Aorta (tissue), 5 donors: ENCODE measurements at regions of chr15 and their contacts with region 1.

Region 1: DNA sequence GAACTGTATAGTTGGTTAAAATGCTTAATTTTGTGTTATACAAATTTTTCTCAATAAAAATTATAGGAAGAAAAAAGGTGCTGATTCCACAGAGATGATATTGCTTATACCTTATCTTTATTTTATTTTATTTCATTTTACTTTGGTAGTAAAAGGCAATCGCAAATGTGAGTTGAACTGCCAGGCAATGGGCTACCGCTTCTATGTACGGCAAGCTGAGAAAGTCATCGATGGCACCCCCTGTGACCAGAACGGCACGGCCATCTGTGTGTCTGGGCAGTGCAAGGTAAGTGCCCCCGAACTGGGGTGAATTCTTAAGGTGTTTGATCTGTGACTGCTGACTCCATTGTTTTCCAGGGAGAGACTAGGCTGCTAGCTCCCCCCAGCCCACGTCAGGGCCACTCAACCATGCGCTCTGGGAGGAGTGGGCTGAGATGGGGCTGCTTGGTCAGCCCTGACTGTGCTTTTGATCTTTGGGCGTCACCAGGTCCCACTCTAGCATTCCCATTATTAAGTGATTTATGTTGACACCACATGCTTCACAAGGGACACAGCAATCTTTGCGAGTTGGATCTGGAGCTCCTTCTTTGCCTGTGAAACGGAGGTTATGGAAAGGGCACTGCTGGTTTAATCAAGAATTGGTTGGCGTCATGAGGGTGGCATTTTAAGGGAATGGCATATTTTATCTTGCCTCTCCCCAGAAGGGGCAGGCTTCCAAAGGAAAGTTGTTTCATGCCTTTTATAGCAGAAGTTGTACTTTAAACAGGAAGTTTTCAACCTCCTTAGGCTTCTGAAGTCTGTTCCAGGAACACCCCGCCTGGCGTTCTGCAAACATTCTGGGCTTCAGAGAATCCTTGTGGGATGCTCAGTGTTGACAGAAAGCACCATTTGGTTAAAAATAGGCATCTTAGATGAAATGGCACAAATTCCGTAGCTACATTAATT is 296.5 kb downstream of the THSD4 start:
- DNase-seq: peak; percentile 68 to 81
- ATAC-seq: peak; percentile 79
- H3K4me3 ChIP-seq: no peak overlapping the region
- H3K27ac ChIP-seq: peak overlapping the region; percentile 98 to 99
- H3K4me1 ChIP-seq: peaks cover 0 to 8% of the 10 kb centered on the region in 2 donors
- H3K27me3 ChIP-seq: no peaks in the 10 kb centered on the region

Region 2: GRCh38 chr15:71109130-71109529 is 302.7 kb before region 1 on chr15:
- intact Hi-C with region 1: loop called in 1 of 2 experiments (anchors 1 kb)
- DNase-seq: no peak
- ATAC-seq: peak; percentile 39
- H3K4me3 ChIP-seq: no peak overlapping the region
- H3K27ac ChIP-seq: no peak overlapping the region
- H3K4me1 ChIP-seq: no peaks in the 10 kb centered on the region
- H3K27me3 ChIP-seq: no peaks in the 10 kb centered on the region

Region 3: DNA sequence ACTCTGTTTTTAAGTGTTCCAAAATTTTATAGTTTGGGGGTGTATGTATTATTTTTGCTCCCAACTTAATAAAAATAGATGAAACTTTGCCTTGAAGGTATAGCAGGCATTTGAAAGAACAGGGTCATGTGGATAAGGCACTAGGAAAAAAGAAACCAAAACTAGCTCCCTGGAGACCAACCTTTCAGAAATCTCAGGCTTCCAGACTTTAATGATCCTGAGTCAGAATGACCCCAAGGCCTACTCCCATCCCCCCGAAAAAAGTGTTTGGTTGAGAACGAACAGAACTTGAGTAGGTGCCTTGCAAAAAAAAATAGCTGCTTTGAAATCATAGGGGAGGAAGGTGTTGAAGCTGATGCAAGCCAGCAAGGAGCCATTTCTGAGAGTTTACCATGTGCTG is 13.0 kb after region 1 on chr15:
- intact Hi-C with region 1: loop called in 1 of 2 experiments (anchors 2 kb)
- DNase-seq: no peak
- ATAC-seq: no peak
- H3K4me3 ChIP-seq: no peak overlapping the region
- H3K27ac ChIP-seq: no peak overlapping the region
- H3K4me1 ChIP-seq: no peaks in the 10 kb centered on the region
- H3K27me3 ChIP-seq: no peaks in the 10 kb centered on the region